Mammary epithelial cell (primary cell): ENCODE measurements at regions of chr1 and their contacts with region 1.

Region 1: DNA sequence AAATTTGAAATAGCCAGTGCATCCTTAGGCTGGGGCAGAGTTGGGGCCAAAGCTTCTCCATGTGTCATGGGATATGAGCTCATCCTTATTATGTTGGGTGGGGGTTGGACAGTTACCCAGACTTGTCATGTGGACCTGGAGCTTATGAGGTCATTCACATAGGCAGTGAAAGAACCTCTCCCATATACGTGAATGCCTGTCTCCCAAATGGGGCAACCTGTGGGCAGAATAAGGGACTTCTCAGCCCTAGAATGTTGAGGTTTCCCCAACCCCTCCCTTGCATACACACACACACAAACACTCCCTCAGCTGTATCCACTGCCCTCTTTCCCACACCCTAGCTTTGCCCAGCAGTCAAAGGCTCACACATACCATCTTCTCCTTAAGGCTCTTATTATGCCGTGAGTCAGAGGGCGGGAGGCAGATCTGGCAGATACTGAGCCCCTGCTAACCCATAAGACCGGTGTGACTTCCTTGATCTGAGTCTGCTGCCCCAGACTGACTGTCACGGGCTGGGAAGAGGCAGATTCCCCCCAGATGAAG is 2.3 kb upstream of the IVL start:
- DNase-seq: peak; percentile 100
- H3K4me3 ChIP-seq: peak overlapping the region in 1 of 3 experiments; percentile 0
- H3K27ac ChIP-seq: peak overlapping the region; percentile 90
- H3K4me1 ChIP-seq: peaks cover 58% of the 10 kb centered on the region
- H3K27me3 ChIP-seq: no peaks in the 10 kb centered on the region
- CTCF ChIP-seq: no peak

Region 2: GRCh38 chr1:152654110-152654509 is 252.0 kb before region 1 on chr1:
- CTCF ChIA-PET with region 1: no interaction called
- dilution Hi-C with region 1: no loop called
- in situ Hi-C with region 1: no loop called
- intact Hi-C with region 1: no loop called
- DNase-seq: peak; percentile 54
- H3K4me3 ChIP-seq: no peak overlapping the region
- H3K27ac ChIP-seq: no peak overlapping the region
- H3K4me1 ChIP-seq: no peaks in the 10 kb centered on the region
- H3K27me3 ChIP-seq: no peaks in the 10 kb centered on the region
- CTCF ChIP-seq: peak; percentile 77 to 88

Region 3: GRCh38 chr1:152880907-152881306 is 25.2 kb before region 1 on chr1:
- CTCF ChIA-PET with region 1: interaction called, 7 read pairs
- dilution Hi-C with region 1: no loop called
- in situ Hi-C with region 1: no loop called
- intact Hi-C with region 1: loop called (anchors 2 kb)
- DNase-seq: no peak
- H3K4me3 ChIP-seq: no peak overlapping the region
- H3K27ac ChIP-seq: peak overlapping the region; percentile 41
- H3K4me1 ChIP-seq: peaks cover 52% of the 10 kb centered on the region
- H3K27me3 ChIP-seq: no peaks in the 10 kb centered on the region
- CTCF ChIP-seq: no peak

Region 4: GRCh38 chr1:152888126-152888525 is 18.0 kb before region 1 on chr1:
- CTCF ChIA-PET with region 1: no interaction called
- dilution Hi-C with region 1: no loop called
- in situ Hi-C with region 1: no loop called
- intact Hi-C with region 1: loop called (anchors 2 kb)
- DNase-seq: peak; percentile 37
- H3K4me3 ChIP-seq: no peak overlapping the region
- H3K27ac ChIP-seq: no peak overlapping the region
- H3K4me1 ChIP-seq: peaks cover 56% of the 10 kb centered on the region
- H3K27me3 ChIP-seq: no peaks in the 10 kb centered on the region
- CTCF ChIP-seq: no peak

Region 5: DNA sequence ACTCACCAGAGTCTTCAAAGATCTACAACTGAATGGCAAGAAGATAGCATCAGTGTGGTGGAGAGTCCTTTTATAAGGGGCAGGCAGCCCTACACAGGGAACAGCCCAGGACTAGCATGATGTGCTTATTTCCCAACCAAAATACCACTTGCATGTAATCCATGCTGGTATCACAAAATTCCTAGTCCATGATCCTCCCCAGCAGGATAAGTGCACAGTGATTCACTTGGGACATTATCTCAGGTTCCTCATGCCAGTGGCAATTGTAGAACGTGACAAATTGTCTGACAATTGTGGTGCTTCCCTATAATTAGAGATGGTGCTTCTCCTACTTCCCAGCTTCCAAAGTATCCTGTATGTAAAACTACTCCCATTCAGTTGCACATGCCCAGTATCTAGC is 244.8 kb after region 1 on chr1 and contains the start of gene SPRR2G:
- CTCF ChIA-PET with region 1: no interaction called
- dilution Hi-C with region 1: no loop called
- in situ Hi-C with region 1: no loop called
- intact Hi-C with region 1: no loop called
- DNase-seq: no peak
- H3K4me3 ChIP-seq: no peak within 1 kb of the TSS
- H3K27ac ChIP-seq: no peak within 1 kb of the TSS
- H3K4me1 ChIP-seq: no peaks in the 10 kb centered on the region
- H3K27me3 ChIP-seq: no peaks in the 10 kb centered on the region
- CTCF ChIP-seq: no peak
- total RNA-seq, gene SPRR2G: not detected